CD4-positive, alpha-beta T cell (primary cell): ENCODE measurements at regions of chr4 and their contacts with region 1.

Region 1: GRCh38 chr4:17576932-17577665 is at the start of gene LAP3:
- DNase-seq: peak; percentile 97 to 100 (median 99)
- ATAC-seq: peak; percentile 84
- H3K4me3 ChIP-seq: peak within 1 kb of the TSS; percentile 94
- H3K4me3 Mint-ChIP-seq: peak within 1 kb of the TSS; percentile 91
- H3K27ac ChIP-seq: peak within 1 kb of the TSS; percentile 81 to 91
- H3K27ac Mint-ChIP-seq: peak within 1 kb of the TSS; percentile 94
- H3K4me1 ChIP-seq: peaks cover 21% of the 10 kb centered on the region
- H3K4me1 Mint-ChIP-seq: peaks cover 34% of the 10 kb centered on the region
- H3K27me3 ChIP-seq: no peaks in the 10 kb centered on the region
- H3K27me3 Mint-ChIP-seq: no peaks in the 10 kb centered on the region
- CTCF ChIP-seq: no peak
- total RNA-seq, gene LAP3: 61.6 TPM

Region 2: DNA sequence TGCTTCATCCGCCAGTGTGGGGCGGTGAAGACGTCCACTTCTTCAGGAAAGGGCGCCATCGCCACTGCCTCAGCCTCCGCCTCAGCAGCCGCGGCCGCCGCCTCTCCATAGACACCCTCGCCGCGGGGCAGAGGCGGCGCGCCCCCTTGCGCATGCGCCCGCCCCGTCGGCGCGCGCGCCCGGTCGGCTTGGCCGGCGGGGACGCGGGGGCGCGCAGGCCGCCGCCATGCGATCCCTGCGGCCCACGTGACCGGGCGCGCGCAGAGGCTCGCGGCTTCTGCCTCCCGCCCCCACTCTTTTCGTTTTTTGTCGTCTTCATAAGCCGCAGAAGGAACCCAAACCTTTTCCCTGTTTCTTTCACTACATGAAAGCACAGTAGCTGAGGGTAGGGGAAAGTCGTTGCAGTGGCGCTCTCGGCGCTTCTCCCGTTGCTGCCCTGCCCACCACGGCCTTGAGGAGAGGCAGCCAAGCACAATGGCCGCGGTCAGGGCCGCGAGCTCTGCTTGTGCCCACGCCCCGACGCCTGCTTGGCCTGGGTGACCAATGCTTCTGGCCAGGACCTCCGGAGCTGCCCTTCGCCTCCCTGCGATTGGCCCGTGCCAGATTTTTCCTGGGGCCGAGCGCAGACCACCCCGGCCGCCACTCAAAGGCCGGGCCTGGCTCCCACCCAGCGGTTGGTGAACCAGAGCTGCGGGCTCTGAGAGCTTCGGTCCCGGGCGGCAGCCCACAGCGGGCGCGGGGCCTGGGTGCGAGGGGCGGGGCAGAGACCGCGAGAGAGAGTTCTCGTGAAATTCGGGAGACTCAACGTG is 1921.7 kb before region 1 on chr4 and contains the start of gene FBXL5:
- CTCF ChIA-PET with region 1: no interaction called
- POLR2A ChIA-PET with region 1: no interaction called
- intact Hi-C with region 1: loop called in 1 of 2 experiments (anchors 10 kb)
- DNase-seq: peak; percentile 58 to 97 (median 80)
- ATAC-seq: peak; percentile 78
- H3K4me3 ChIP-seq: peak within 1 kb of the TSS; percentile 89
- H3K4me3 Mint-ChIP-seq: peak within 1 kb of the TSS; percentile 95
- H3K27ac ChIP-seq: peak within 1 kb of the TSS; percentile 90 to 93
- H3K27ac Mint-ChIP-seq: peak within 1 kb of the TSS; percentile 90
- H3K4me1 ChIP-seq: peaks cover 22% of the 10 kb centered on the region
- H3K4me1 Mint-ChIP-seq: peaks cover 46% of the 10 kb centered on the region
- H3K27me3 ChIP-seq: no peaks in the 10 kb centered on the region
- H3K27me3 Mint-ChIP-seq: no peaks in the 10 kb centered on the region
- CTCF ChIP-seq: no peak
- total RNA-seq, gene FBXL5: 60.1 to 62.5 TPM

Region 3: DNA sequence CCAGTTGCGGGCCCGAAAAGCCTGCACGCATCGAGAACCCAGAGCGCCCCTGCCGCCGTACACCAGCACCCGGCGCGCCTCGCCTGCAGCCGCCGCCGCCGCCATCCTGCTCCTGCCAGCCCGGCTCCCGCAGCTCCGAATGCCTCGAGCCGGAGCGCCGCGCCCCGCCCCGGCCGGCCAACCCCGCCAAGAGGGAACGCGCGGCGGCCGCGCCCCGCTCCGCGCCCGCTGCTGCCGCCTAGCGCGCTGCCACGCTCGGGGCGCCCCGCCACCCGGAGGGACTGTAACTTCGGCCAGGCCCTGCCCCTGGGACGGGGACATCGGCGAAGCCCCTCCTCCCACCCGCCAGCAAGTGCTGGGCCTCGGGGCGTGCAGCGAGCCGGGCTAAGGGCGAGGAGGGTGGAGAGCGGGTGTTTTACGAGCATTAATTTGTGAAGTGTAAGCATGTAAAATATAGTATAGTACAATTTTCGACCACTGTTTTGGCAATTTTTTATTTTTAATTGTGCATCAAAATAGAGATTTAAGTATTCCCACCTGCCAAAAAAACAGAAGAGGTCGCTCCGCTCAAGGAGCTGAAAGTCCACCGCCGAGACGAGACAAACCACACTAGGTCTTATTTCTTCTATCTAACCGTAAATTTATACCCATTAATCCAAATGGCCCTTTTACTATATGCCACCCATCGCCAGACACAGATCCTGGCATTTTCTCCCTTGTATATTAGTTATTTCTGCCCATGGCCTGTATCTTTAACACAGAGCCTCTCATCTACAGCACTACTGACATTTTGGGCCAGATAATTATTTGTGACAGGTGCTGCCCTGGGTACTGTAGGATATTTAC is 64.9 kb before region 1 on chr4 and contains the start of gene QDPR:
- CTCF ChIA-PET with region 1: no interaction called
- POLR2A ChIA-PET with region 1: no interaction called
- intact Hi-C with region 1: loop called (anchors 2 kb)
- DNase-seq: peak; percentile 51 to 87 (median 68)
- ATAC-seq: peak; percentile 91
- H3K4me3 ChIP-seq: peak within 1 kb of the TSS; percentile 86
- H3K4me3 Mint-ChIP-seq: peak within 1 kb of the TSS; percentile 99
- H3K27ac ChIP-seq: peak within 1 kb of the TSS in 1 of 2 donors; percentile 9
- H3K27ac Mint-ChIP-seq: peak within 1 kb of the TSS; percentile 84
- H3K4me1 ChIP-seq: peaks cover 23% of the 10 kb centered on the region
- H3K4me1 Mint-ChIP-seq: peaks cover 33% of the 10 kb centered on the region
- H3K27me3 ChIP-seq: no peaks in the 10 kb centered on the region
- H3K27me3 Mint-ChIP-seq: peaks cover 6% of the 10 kb centered on the region
- CTCF ChIP-seq: peak; percentile 47
- total RNA-seq, gene QDPR: 15.3 to 15.7 TPM

Region 4: DNA sequence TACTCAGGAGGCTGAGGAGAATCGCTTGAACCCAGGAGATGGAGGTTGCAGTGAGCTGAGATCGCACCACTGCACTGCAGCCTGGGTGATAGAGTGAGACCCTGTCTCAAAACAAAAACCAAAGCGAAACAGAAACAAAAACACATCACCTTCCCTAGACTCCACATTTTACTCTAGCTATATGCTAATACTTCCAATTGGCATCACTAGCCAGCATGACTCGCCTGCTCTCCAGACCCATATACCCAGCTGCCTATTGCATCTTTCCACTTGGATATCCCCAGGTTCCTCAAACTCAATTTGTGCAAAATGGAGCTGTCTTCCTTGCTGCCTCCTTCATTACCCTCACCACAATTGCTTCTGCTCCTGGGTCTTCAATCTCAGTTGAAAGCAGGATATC is 22.5 kb before region 1 on chr4:
- CTCF ChIA-PET with region 1: interaction called, 6 read pairs
- POLR2A ChIA-PET with region 1: interaction called, 4 read pairs
- intact Hi-C with region 1: loop called (anchors 2 kb)
- DNase-seq: no peak
- ATAC-seq: no peak
- H3K4me3 ChIP-seq: no peak overlapping the region
- H3K4me3 Mint-ChIP-seq: no peak overlapping the region
- H3K27ac ChIP-seq: no peak overlapping the region
- H3K27ac Mint-ChIP-seq: no peak overlapping the region
- H3K4me1 ChIP-seq: no peaks in the 10 kb centered on the region
- H3K4me1 Mint-ChIP-seq: no peaks in the 10 kb centered on the region
- H3K27me3 ChIP-seq: peaks cover 0 to 3% of the 10 kb centered on the region in 2 experiments
- H3K27me3 Mint-ChIP-seq: peaks cover 19% of the 10 kb centered on the region
- CTCF ChIP-seq: no peak

Region 5: DNA sequence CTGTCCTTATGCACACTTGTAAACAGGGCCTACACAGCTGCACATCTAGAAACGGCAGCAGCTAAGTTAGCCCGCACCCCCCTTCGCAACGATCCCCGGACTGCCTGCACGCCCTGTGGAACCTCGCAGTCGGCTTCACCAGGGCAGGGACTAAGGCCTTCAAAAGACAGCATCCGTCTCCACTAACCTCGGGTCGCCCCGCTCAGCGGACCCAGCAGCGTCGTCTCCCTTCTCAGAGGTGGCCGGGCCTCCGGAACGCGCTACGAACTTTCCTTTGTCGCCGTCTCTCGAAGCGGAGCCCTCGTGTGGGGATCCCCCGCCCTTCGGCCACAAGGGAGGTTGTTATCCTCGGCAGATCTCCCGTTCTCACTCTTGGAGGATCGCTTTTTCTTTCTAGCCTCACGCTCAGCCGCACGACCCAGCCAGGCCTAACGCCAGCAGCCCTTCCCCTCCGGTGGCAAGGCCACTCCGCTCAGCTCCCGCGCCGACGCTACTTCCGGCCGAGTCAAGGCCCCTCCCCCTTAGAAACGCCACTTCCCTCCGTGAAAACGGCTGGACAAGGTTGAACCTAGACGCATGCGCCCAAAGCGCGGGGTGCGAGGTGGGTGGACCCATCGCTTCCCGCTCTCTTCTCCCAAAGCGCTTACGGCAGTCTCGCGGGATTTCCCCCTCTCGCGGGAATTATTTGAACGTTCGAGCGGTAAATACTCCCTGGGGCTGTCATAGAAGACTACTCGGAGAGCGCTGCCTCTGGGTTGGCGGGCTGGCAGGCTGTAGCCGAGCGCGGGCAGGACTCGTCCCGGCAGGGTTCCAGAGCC is 233.4 kb after region 1 on chr4 and contains the starts of genes DCAF16 and NCAPG:
- CTCF ChIA-PET with region 1: no interaction called
- POLR2A ChIA-PET with region 1: interaction called, 17 read pairs
- intact Hi-C with region 1: loop called (anchors 1 to 2 kb)
- DNase-seq: peak; percentile 97 to 100 (median 99)
- ATAC-seq: peak; percentile 86
- H3K4me3 ChIP-seq: peak within 1 kb of the TSS; percentile 92
- H3K4me3 Mint-ChIP-seq: peak within 1 kb of the TSS; percentile 97
- H3K27ac ChIP-seq: peak within 1 kb of the TSS; percentile 92 to 96
- H3K27ac Mint-ChIP-seq: peak within 1 kb of the TSS; percentile 96
- H3K4me1 ChIP-seq: peaks cover 20% of the 10 kb centered on the region
- H3K4me1 Mint-ChIP-seq: peaks cover 63% of the 10 kb centered on the region
- H3K27me3 ChIP-seq: no peaks in the 10 kb centered on the region
- H3K27me3 Mint-ChIP-seq: no peaks in the 10 kb centered on the region
- CTCF ChIP-seq: no peak
- total RNA-seq, gene DCAF16: 88.5 to 91.4 TPM
- total RNA-seq, gene NCAPG: 0.58 to 0.61 TPM